HEK293T (cell line): ENCODE measurements at regions of chr2 and their contacts with region 1.

Region 1: DNA sequence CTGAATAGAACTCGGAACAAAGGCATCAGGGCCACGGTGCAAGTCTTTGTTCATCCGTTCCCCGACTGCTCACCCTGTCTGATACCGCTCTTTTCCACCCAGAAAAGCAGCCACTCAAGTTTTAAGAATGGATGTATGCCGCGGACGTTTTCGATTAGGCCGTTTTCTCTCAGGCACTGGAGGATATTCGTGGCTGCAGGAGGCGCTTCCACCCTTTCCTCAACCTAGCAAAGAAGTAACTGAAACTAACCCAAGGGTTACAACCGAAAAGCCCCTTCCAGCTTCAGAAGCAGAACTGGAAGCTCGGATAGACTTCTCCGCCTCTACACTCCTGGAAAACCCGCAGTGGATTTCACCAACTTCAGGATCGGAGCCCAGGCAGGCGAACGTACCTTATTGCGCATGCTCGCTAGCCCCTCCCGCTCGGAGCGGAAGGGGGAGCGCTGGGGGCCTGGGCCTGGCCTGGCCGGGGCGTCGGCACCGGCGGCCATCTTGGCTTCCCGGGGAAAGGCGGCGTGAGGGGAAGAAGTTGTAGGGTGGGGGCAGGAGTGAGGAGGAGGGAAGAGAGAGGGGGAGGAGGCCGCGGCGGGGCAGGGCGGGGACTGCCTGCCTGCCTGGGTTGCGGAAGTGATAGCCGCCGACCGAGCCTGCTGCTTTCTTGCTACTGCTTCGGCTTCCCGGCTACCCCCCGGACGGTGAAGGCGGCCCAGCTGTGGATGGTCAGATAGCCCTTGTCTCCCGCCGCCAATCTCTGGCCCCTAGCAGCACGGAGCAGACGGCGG is at the start of gene ACTR3:
- DNase-seq: peak; percentile 94

Region 2: DNA sequence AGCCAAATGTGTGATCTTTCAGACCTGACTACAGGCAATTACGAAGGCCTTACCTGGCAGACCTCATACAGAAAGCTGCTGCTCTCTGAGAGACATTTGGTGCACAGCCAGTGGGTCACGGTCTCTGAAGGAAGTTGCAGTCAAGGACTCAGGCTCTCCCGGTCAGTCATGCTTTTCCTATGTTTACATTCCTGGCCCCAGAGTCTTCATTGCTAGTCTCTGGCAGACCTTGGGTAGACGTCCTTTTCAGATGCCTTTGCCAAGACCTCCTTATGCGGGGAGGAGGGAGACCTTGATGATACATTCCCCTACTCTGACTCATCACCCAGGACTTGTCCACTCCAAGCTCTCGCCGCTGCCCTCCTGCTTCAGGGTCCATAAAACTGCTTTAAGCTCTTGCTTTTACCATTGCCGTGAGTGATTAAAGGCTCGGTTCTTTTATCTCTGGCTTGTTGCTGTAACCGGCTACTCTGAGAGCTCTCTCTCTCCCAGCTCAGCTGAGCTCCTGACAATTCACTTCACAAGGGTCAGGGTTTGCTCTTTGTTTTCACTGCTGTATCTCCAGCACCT is 71.2 kb before region 1 on chr2:
- CTCF ChIA-PET with region 1: no interaction called
- POLR2A ChIA-PET with region 1: interaction called, 11 read pairs
- DNase-seq: peak; percentile 39

Region 3: GRCh38 chr2:113858764-113859163 is 30.9 kb before region 1 on chr2:
- CTCF ChIA-PET with region 1: no interaction called
- POLR2A ChIA-PET with region 1: no interaction called
- DNase-seq: no peak

Region 4: DNA sequence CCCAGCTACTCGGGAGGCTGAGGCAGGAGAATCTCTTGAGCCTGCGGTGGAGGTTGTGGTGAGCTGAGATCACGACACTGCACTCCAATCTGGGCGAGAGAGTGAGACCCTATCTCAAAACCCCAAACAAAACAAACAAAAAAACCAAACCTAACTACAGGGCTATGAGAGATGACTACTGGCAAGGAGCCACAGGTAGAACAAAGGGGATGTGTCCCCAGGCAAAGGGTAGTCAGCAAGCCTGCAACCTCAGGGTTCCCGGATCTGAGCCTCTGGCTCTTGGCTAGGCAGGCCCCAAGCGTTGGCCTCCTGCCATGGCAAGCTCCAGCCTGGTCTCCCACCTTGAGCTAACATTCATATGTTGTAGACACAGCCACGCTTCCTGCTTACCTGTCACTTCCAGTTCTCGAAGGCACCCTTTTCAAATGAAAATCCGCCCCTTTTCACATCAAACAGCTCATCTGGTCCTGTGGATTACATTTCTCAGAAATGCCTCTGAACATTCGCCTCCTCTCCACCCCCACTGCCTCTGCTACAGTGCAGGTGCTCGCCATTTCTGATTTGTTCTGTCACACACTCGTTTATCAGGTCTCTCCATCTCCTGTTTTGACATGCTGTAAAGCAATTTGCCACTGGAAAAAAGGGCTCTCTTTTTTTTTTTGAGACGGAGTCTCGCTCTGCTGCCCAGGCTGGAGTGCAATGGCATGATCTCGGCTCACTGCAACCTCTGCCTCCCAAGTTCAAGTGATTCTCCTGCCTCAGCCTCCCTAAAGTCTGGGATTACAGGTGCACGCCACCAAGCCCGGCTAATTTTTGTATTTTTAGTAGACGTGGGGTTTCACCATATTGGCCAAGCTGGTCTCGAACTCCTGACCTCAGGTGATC is 12.9 kb before region 1 on chr2:
- CTCF ChIA-PET with region 1: interaction called, 3 read pairs
- POLR2A ChIA-PET with region 1: interaction called, 15 read pairs
- DNase-seq: no peak